PC-3 (cell line): ENCODE measurements at regions of chr15 and their contacts with region 1.

Region 1: GRCh38 chr15:39273717-39274411 is 307.0 kb upstream of the THBS1 start:
- DNase-seq: peak; percentile 100
- ATAC-seq: peak; percentile 83
- H3K4me3 ChIP-seq: peak overlapping the region; percentile 57
- H3K27ac ChIP-seq: peak overlapping the region; percentile 97
- H3K4me1 ChIP-seq: peaks cover 54% of the 10 kb centered on the region
- H3K27me3 ChIP-seq: no peaks in the 10 kb centered on the region
- CTCF ChIP-seq: no peak

Region 2: GRCh38 chr15:39125904-39126303 is 148.0 kb before region 1 on chr15:
- CTCF ChIA-PET with region 1: no interaction called
- POLR2A ChIA-PET with region 1: no interaction called
- intact Hi-C with region 1: loop called (anchors 1 kb)
- DNase-seq: peak; percentile 78
- ATAC-seq: no peak
- H3K4me3 ChIP-seq: no peak overlapping the region
- H3K27ac ChIP-seq: peak overlapping the region; percentile 88
- H3K4me1 ChIP-seq: peaks cover 70% of the 10 kb centered on the region
- H3K27me3 ChIP-seq: no peaks in the 10 kb centered on the region
- CTCF ChIP-seq: peak; percentile 76

Region 3: DNA sequence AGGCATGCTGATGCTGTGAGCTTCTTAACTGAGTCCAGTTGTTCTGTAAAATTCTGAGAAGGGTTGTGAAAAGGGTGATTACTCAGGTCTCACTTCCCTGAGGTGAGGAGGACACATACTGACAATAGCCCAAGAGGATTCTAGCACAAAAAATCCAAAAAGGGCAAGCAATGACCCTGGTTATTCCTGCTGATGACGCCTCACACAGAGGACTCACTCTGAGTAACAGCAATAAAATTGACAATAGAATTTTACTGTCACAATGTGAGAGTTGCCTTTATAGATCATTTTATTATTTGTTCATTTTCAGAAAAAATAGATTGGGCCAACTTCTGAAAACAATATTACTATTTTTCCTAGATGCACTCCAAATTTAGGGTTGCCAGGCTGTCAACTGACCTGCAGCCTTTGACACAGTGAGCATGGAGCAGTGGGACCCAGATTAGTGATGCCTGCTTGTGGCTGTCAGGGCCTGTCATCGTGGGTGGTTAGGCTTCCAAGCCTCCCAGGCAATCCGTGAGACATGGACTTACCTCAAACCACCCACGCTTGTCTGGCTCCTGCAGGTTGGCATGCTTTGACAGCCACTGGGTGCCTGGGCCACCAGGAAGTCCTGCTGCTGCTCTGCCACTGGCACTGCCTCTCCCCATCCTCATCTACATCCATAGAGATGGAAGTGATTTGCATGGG is 89.0 kb before region 1 on chr15:
- CTCF ChIA-PET with region 1: no interaction called
- POLR2A ChIA-PET with region 1: interaction called, 4 read pairs
- intact Hi-C with region 1: loop called (anchors 2 kb)
- DNase-seq: peak; percentile 94
- ATAC-seq: peak; percentile 76
- H3K4me3 ChIP-seq: no peak overlapping the region
- H3K27ac ChIP-seq: peak overlapping the region; percentile 96
- H3K4me1 ChIP-seq: peaks cover 71% of the 10 kb centered on the region
- H3K27me3 ChIP-seq: no peaks in the 10 kb centered on the region
- CTCF ChIP-seq: no peak

Region 4: GRCh38 chr15:39202641-39203040 is 71.2 kb before region 1 on chr15:
- CTCF ChIA-PET with region 1: no interaction called
- POLR2A ChIA-PET with region 1: interaction called, 5 read pairs
- intact Hi-C with region 1: loop called (anchors 1 kb)
- DNase-seq: peak; percentile 89
- ATAC-seq: peak; percentile 92
- H3K4me3 ChIP-seq: peak overlapping the region; percentile 13; the same call in 1 of the 2 replicates
- H3K27ac ChIP-seq: peak overlapping the region; percentile 97
- H3K4me1 ChIP-seq: peaks cover 69% of the 10 kb centered on the region
- H3K27me3 ChIP-seq: no peaks in the 10 kb centered on the region
- CTCF ChIP-seq: no peak

Region 5: GRCh38 chr15:39248204-39248603 is 25.7 kb before region 1 on chr15:
- CTCF ChIA-PET with region 1: no interaction called
- POLR2A ChIA-PET with region 1: no interaction called
- intact Hi-C with region 1: loop called (anchors 1 kb)
- DNase-seq: peak; percentile 86
- ATAC-seq: peak; percentile 90
- H3K4me3 ChIP-seq: 0 out of 2 replicates have a peak overlapping the region, but pooled peaks have one; percentile 12
- H3K27ac ChIP-seq: peak overlapping the region; percentile 94
- H3K4me1 ChIP-seq: peaks cover 47% of the 10 kb centered on the region
- H3K27me3 ChIP-seq: no peaks in the 10 kb centered on the region
- CTCF ChIP-seq: no peak